Spleen (tissue), 13 donors: ENCODE measurements at regions of chr7 and their contacts with region 1.

Region 1: DNA sequence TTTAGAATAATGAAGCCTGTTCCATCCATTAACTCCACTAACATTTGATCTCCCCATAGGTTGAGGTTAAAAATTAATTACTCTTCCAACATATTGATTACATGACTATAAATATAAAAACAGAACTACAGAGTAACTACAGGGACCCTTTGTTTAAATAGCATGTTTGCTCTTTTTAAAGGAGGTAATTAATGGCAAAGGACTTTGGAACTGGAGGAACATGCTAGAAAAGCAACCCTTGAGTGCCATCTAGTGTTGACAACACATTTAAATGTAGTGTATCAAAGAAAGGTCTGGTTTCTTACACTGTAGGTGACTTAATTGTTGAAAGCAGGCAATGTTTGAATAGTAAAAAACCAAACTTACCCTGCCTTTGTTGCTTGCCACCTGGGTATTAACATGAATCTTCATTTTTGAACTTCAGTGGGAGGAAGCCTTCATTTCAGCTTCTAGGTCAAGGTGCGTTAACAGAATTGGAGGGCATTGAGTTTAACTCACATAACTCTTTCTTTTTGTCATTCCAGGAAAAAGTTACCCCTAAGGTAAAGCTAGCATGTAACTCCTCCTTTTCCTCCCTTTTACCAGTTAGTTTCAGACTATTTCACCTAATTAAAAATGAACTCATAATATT is 52.6 kb upstream of the CAPZA2 start:
- DNase-seq: no peak
- H3K4me3 ChIP-seq: no peak overlapping the region
- H3K27ac ChIP-seq: no peak overlapping the region
- H3K4me1 ChIP-seq: no peaks in the 10 kb centered on the region
- H3K27me3 ChIP-seq: no peaks in the 10 kb centered on the region
- CTCF ChIP-seq: peak in 9 of 11 experiments; percentile 37 to 67 (median 55)
- POLR2A ChIP-seq: no peak

Region 2: DNA sequence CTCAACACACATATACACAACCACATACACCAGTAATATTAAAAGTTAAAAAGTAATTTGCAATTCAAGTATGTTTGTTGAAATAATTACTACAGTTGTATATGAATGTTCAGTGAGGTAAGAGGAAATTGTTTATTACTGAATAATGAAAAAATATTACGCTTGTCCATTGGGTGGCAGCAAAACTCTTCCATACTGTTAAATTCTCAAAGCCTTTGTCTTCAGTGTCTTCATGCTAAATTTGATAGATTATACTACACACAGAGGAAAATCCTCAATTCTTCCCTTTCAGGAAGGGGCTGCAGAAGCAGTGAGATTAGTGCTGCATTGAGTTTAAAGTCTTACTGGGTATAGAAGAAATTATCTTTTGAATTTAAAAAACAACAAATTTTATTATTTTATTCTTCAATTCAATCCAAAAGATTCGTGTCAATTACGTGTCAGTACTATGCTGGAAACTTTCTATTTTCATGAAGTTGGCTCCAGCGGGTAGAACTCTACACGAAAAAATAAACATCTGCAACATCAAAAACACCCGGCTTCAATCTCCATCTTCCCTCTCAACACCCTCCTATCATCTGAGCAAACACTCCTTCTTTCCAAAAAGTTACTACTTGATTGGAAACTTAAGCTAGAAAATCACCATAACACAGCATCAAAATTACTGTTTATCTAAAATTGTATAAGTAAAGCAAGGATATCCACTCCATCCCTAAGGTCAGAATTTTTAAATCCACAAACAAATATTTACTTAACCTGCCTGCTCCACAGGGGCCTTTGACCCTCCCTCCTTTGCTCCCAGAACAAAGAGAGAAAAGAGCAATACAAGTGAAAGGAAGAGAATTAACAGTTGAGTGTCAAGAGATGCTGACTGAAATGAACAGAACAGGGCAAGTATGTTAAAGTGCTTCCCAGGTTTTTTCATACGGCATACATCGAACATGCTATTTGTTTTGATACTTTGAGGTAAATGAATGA is 636.4 kb before region 1 on chr7:
- intact Hi-C with region 1: loop called (anchors 5 kb)
- DNase-seq: no peak
- H3K4me3 ChIP-seq: no peak overlapping the region
- H3K27ac ChIP-seq: no peak overlapping the region
- H3K4me1 ChIP-seq: no peaks in the 10 kb centered on the region
- H3K27me3 ChIP-seq: no peaks in the 10 kb centered on the region
- CTCF ChIP-seq: peak; percentile 25 to 62 (median 53)
- POLR2A ChIP-seq: no peak